Psoas muscle (tissue), 8 donors: ENCODE measurements at regions of chr9 and their contacts with region 1.

Region 1: GRCh38 chr9:69971643-69972449 is 71.8 kb upstream of the MAMDC2 start:
- DNase-seq: peak; percentile 71 to 86
- ATAC-seq: peak; percentile 74 to 92 (median 78)
- H3K4me3 ChIP-seq: no peak overlapping the region
- H3K27ac ChIP-seq: no peak overlapping the region
- H3K4me1 ChIP-seq: no peaks in the 10 kb centered on the region
- H3K27me3 ChIP-seq: no peaks in the 10 kb centered on the region
- CTCF ChIP-seq: peak; percentile 89

Region 2: GRCh38 chr9:69689991-69690538 is 281.8 kb before region 1 on chr9:
- intact Hi-C with region 1: no loop called
- DNase-seq: no peak
- ATAC-seq: no peak
- H3K4me3 ChIP-seq: no peak overlapping the region
- H3K27ac ChIP-seq: no peak overlapping the region
- H3K4me1 ChIP-seq: no peaks in the 10 kb centered on the region
- H3K27me3 ChIP-seq: no peaks in the 10 kb centered on the region
- CTCF ChIP-seq: no peak

Region 3: DNA sequence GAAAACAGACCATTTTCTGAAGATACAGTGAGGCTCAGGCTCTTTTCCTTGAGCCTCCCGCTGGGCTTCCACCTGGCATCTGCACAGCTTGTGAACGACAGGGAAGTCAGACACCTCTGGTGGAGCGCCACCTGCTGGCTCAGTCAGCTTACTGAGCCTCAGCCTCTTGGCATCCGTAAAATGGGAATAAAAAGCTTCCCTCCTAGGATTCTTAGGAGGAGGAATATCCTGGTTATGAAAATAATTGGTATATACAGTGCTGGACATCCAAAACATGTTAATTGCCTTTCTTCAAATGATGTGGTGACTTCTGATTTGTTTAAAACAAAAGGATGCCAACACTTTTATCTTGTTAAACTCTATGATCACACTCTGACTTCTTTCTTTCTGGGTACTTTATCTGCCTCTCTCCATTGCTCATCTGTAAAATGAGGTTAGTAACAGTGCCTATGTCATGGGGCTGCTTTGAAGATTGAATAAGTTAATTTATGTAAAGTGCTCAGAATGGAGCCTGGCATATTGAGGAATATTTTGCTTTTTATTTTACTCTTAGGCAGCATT is 139.3 kb after region 1 on chr9:
- intact Hi-C with region 1: loop called (anchors 2 kb)
- DNase-seq: peak; percentile 85 to 88
- ATAC-seq: peak; percentile 79 to 93 (median 86)
- H3K4me3 ChIP-seq: no peak overlapping the region
- H3K27ac ChIP-seq: no peak overlapping the region
- H3K4me1 ChIP-seq: peaks cover 5% of the 10 kb centered on the region
- H3K27me3 ChIP-seq: no peaks in the 10 kb centered on the region
- CTCF ChIP-seq: peak; percentile 91

Region 4: DNA sequence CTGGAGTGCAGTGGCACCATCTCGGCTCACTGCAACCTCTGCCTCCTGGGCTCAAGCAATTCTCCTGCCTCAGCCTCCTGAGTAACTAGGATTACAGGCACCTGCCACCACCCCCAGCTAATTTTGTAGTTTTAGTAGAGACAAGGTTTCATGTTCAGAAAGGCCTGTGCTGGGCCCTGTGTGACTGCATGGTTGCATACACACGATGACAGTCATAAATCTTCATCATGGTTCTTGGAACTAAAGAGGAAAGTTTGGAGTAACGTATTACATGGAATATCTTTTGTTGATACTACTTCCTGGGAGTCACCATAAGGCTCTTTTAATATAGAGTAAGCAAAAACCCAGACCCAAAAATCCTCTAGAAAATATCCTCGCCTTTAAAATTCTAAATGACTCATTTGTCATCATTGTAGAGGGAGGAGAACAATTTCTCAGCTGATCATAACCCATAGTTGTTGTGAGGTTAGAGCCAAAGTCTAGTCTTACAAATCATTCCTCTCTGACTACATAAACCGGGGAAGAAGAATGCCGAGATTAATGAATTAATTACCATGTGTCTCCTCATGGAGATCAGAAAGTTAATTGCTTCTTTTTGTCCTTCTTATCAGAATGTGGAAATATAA is 395.6 kb after region 1 on chr9:
- intact Hi-C with region 1: no loop called
- DNase-seq: no peak
- ATAC-seq: peak; percentile 37 to 76 (median 64)
- H3K4me3 ChIP-seq: no peak overlapping the region
- H3K27ac ChIP-seq: peak overlapping the region; percentile 2
- H3K4me1 ChIP-seq: peaks cover 9% of the 10 kb centered on the region
- H3K27me3 ChIP-seq: no peaks in the 10 kb centered on the region
- CTCF ChIP-seq: no peak